HepG2 (cell line): ENCODE measurements at regions of chr1 and their contacts with region 1.

Region 1: DNA sequence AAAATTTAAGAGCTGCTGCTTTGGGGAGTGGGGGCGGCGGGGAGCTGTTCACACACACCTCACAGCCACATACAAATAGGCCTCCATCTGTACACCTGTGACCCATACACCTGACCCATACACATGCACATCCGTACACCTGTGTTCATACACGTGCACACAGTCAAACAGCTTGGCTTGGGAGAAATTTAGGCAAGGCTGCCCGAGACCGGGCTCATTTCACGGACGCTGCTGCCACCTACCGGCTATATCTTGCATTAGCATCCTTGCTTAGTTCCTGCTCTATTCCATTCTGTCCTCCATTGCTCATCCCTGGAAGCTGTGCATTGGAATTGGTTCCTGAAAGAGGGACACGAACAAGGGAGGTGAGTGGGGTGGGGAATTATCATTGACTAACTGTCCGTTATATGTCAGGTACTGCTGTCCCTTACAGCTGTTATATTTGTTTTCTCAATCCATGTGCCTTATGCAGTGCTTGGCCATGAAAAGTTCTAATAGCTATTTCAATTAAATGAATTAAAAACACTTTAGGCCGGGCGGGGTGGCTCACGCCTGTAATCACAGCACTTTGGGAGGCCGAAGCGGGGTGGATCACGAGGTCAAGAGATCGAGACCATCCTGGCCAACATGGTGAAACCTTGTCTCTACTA is 37.1 kb upstream of the EPB41 start:
- DNase-seq: peak; percentile 62
- ATAC-seq: peak; percentile 76
- H3K4me3 ChIP-seq: no peak overlapping the region
- H3K27ac ChIP-seq: no peak overlapping the region
- H3K4me1 ChIP-seq: peaks cover 34% of the 10 kb centered on the region
- H3K27me3 ChIP-seq: no peaks in the 10 kb centered on the region; a peak in 1 of 5 replicates
- CTCF ChIP-seq: peak; percentile 98
- EP300 ChIP-seq: no peak
- POLR2A ChIP-seq: no peak
- RAD21 ChIP-seq: peak; percentile 92

Region 2: DNA sequence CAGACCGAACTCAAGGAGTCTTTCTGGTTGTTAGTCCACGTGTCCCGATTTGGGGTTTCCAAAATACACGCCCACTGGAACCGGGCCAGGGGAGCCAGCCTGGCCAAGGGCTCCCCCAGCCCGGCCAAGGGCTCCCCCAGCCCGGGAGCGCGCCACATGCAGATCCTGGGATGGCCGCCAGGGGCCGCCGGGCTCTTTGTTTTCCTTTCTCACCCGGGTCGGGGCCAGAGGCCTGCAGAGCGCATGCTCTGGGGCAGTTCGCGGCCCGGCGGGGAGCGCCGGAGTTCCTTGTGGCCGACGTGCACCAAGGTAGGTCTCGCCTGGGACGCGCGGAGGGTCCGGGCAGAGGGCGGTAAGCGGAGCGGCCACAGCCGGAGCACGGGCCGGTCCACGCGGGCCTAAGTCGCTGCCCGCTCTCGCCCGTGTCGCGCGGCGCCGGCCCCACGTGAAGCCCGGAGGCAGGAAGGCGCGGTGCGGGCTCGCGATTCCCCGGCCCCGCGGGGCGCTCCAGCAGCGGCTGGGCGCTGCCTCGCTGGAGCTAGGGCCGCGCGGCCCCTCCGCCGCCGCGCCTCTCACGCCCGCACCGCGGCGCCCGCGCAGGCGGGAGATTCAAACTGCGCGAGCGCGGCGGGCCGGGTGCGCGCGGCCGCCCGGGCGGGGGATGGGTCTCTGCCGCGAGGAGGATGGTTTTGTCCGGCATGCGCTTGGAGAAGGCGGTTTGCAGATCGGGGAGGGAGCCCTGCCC is 359.1 kb before region 1 on chr1:
- CTCF ChIA-PET with region 1: no interaction called
- POLR2A ChIA-PET with region 1: interaction called, 3 read pairs
- in situ Hi-C with region 1: no loop called
- intact Hi-C with region 1: loop called (anchors 10 kb)
- DNase-seq: peak; percentile 76
- ATAC-seq: peak; percentile 45
- H3K4me3 ChIP-seq: peak overlapping the region; percentile 66 to 85 (median 75)
- H3K27ac ChIP-seq: peak overlapping the region; percentile 91
- H3K4me1 ChIP-seq: peaks cover 31% of the 10 kb centered on the region
- H3K27me3 ChIP-seq: no peaks in the 10 kb centered on the region
- CTCF ChIP-seq: peak; percentile 92
- EP300 ChIP-seq: 0 out of 4 replicates have a peak, but pooled peaks of 1 of the 2 experiments have one; percentile 6
- POLR2A ChIP-seq: peak; percentile 47 to 86; a peak in 3 of 4 replicates
- RAD21 ChIP-seq: peak; percentile 87

Region 3: DNA sequence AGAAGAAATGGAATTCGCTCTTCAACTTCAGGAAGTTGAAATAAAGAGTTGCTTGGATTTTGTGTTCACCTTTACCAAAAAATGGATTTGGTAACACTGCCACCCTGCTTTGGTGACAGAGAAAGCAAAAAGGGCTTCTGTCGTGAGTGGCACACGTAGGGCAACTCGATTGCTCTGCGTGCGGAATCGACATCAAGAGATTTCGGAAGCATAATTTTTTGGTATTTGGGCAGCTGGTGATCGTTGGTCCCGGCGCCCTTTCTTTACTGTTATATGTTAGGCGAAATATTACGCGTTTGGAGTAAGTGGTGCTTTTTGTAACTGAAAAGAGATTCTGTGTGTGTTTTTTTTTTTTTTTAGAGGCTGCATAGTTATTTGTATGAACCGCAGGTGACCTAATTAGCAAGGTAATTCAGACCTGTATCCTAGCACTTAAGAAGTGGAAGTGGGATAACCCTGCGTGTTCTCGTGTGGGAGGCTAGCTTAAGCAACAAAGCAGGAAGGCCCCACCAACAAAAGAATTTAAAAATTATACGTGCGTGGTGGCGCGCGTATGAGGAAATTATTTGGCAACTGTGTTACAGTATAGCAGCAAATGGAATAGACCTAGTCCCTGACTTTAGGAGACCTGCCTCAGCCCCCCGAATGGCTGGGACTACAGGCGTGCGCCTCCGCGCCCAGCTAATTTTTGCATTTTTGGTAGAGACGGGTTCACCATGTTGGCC is 228.6 kb before region 1 on chr1 and contains the start of gene RNU11:
- CTCF ChIA-PET with region 1: no interaction called
- POLR2A ChIA-PET with region 1: interaction called, 14 read pairs
- in situ Hi-C with region 1: loop called (anchors 5 kb)
- intact Hi-C with region 1: loop called (anchors 5 kb)
- DNase-seq: peak; percentile 95
- ATAC-seq: peak; percentile 81
- H3K4me3 ChIP-seq: peak within 1 kb of the TSS; percentile 56 to 81 (median 68)
- H3K27ac ChIP-seq: peak within 1 kb of the TSS; percentile 100
- H3K4me1 ChIP-seq: peaks cover 56% of the 10 kb centered on the region
- H3K27me3 ChIP-seq: no peaks in the 10 kb centered on the region
- CTCF ChIP-seq: no peak; the same call in none of the 2 replicates
- EP300 ChIP-seq: peak in 1 of 2 experiments; percentile 77; a peak in 3 of 4 replicates
- POLR2A ChIP-seq: peak; percentile 99 to 100
- RAD21 ChIP-seq: peak; percentile 43
- total RNA-seq, gene RNU11: not detected in 2 replicates

Region 4: GRCh38 chr1:28782011-28782410 is 95.2 kb before region 1 on chr1:
- CTCF ChIA-PET with region 1: interaction called, 37 read pairs
- POLR2A ChIA-PET with region 1: interaction called, 5 read pairs
- in situ Hi-C with region 1: loop called (anchors 5 kb)
- intact Hi-C with region 1: loop called (anchors 1 kb)
- DNase-seq: no peak
- ATAC-seq: peak; percentile 34
- H3K4me3 ChIP-seq: peak overlapping the region; percentile 37 to 64 (median 53); a peak in 5 of 6 replicates
- H3K27ac ChIP-seq: no peak overlapping the region
- H3K4me1 ChIP-seq: peaks cover 49% of the 10 kb centered on the region
- H3K27me3 ChIP-seq: peaks cover 0 to 13% of the 10 kb centered on the region in 2 experiments; a peak in 2 of 5 replicates
- CTCF ChIP-seq: no peak
- EP300 ChIP-seq: no peak
- POLR2A ChIP-seq: no peak
- RAD21 ChIP-seq: no peak

Region 5: GRCh38 chr1:28792644-28793121 is 84.6 kb before region 1 on chr1:
- CTCF ChIA-PET with region 1: interaction called, 37 read pairs
- POLR2A ChIA-PET with region 1: no interaction called
- in situ Hi-C with region 1: loop called (anchors 5 kb)
- intact Hi-C with region 1: no loop called
- DNase-seq: no peak
- ATAC-seq: peak; percentile 46
- H3K4me3 ChIP-seq: no peak overlapping the region
- H3K27ac ChIP-seq: no peak overlapping the region
- H3K4me1 ChIP-seq: peaks cover 16% of the 10 kb centered on the region
- H3K27me3 ChIP-seq: peaks cover 2 to 11% of the 10 kb centered on the region in 2 experiments; a peak in 2 of 5 replicates
- CTCF ChIP-seq: no peak
- EP300 ChIP-seq: no peak
- POLR2A ChIP-seq: no peak
- RAD21 ChIP-seq: no peak

Region 6: GRCh38 chr1:28811766-28812668 is 65.2 kb before region 1 on chr1 and contains the start of gene OPRD1:
- CTCF ChIA-PET with region 1: no interaction called
- POLR2A ChIA-PET with region 1: no interaction called
- in situ Hi-C with region 1: no loop called
- intact Hi-C with region 1: no loop called
- DNase-seq: no peak
- ATAC-seq: no peak
- H3K4me3 ChIP-seq: peak within 1 kb of the TSS in 2 of 3 experiments; percentile 8 to 31; a peak in 4 of 6 replicates
- H3K27ac ChIP-seq: no peak within 1 kb of the TSS
- H3K4me1 ChIP-seq: peaks cover 36% of the 10 kb centered on the region
- H3K27me3 ChIP-seq: peaks cover 14 to 68% of the 10 kb centered on the region in 2 experiments
- CTCF ChIP-seq: no peak
- EP300 ChIP-seq: no peak
- POLR2A ChIP-seq: no peak
- RAD21 ChIP-seq: no peak
- total RNA-seq, gene OPRD1: 0.02 TPM in 1 of 2 replicates, not detected in the other

Region 7: DNA sequence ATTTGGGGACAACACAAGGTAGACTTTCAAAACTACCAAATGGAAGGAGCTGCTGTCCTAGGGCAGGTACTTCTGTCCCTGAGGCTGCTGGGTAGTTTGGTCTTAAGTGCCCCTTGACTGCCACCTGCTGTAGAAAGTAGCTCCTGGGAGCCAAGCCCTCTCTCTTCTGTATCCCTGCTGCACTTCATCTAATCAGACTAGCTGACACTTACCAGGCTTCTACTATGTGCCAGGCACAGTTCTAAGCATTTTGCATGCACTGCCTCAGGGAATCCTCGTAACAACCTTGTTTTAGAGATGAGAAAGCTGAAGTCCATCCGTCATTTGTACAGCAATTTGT is 320.3 kb after region 1 on chr1:
- CTCF ChIA-PET with region 1: interaction called, 12 read pairs
- POLR2A ChIA-PET with region 1: interaction called, 5 read pairs
- in situ Hi-C with region 1: loop called (anchors 5 kb)
- intact Hi-C with region 1: loop called (anchors 1 kb)
- DNase-seq: peak; percentile 60
- ATAC-seq: peak; percentile 92
- H3K4me3 ChIP-seq: no peak overlapping the region
- H3K27ac ChIP-seq: no peak overlapping the region
- H3K4me1 ChIP-seq: peaks cover 12% of the 10 kb centered on the region
- H3K27me3 ChIP-seq: no peaks in the 10 kb centered on the region
- CTCF ChIP-seq: peak; percentile 77
- EP300 ChIP-seq: no peak
- POLR2A ChIP-seq: no peak
- RAD21 ChIP-seq: peak; percentile 66; the same call in 1 of the 2 replicates